OCI-LY7 (cell line): ENCODE measurements at regions of chrX and their contacts with region 1.

Region 1: DNA sequence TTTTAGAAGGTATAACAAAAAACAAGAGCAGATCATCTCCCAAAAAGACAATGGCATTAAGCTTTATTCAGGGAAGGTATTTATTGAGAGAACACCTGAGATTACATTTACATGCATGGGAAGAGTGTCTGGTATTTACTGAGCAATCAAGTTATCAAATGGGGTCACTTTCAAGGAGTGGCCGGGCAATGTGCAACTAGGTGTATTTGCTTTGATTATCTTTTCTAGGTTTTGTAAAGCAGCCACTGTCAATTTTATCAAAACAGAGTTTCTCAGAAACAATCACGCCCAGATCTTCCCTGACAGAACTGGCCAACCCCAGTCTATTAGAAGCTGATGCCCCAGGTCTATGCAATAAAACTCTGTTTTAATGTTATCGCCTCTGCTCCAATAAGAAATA is 169.5 kb downstream of the GLRA2 start:
- DNase-seq: no peak
- H3K4me3 ChIP-seq: no peak overlapping the region
- H3K27ac ChIP-seq: no peak overlapping the region
- H3K4me1 ChIP-seq: no peaks in the 10 kb centered on the region
- CTCF ChIP-seq: no peak

Region 2: GRCh38 chrX:14039344-14039743 is 659.4 kb before region 1 on chrX:
- CTCF ChIA-PET with region 1: no interaction called
- POLR2A ChIA-PET with region 1: no interaction called
- intact Hi-C with region 1: no loop called
- DNase-seq: peak; percentile 59
- H3K4me3 ChIP-seq: no peak overlapping the region
- H3K27ac ChIP-seq: no peak overlapping the region
- H3K4me1 ChIP-seq: no peaks in the 10 kb centered on the region
- CTCF ChIP-seq: peak; percentile 80

Region 3: DNA sequence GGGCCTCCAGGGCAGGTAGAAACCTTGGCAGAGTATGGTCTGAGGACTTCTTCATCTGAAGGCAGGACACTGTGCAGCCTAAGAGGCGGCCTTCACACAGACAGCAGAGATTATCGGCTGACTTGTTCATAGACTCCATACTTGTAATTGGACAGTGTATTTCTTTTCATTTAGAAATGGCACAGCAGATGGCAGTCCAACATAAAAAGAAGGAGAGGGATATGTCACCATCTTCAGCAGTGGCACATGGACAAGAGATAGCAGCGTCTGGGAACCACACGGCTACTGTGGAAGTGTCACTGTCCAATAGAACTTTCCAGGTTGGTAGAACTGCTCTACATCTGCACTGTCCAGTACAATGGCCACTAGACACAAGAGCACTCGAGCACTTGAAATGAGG is 647.4 kb before region 1 on chrX:
- CTCF ChIA-PET with region 1: no interaction called
- POLR2A ChIA-PET with region 1: interaction called, 11 read pairs
- intact Hi-C with region 1: no loop called
- DNase-seq: no peak
- H3K4me3 ChIP-seq: no peak overlapping the region
- H3K27ac ChIP-seq: no peak overlapping the region
- H3K4me1 ChIP-seq: no peaks in the 10 kb centered on the region
- CTCF ChIP-seq: no peak

Region 4: GRCh38 chrX:14564058-14564457 is 134.7 kb before region 1 on chrX:
- CTCF ChIA-PET with region 1: no interaction called
- POLR2A ChIA-PET with region 1: no interaction called
- intact Hi-C with region 1: no loop called
- DNase-seq: no peak
- H3K4me3 ChIP-seq: no peak overlapping the region
- H3K27ac ChIP-seq: no peak overlapping the region
- H3K4me1 ChIP-seq: no peaks in the 10 kb centered on the region
- CTCF ChIP-seq: no peak